Ovary (tissue), 10 donors: ENCODE measurements at regions of chr20 and their contacts with region 1.

Region 1: GRCh38 chr20:41352108-41352507 is 11.5 kb downstream of the LPIN3 start:
- DNase-seq: no peak
- H3K4me3 ChIP-seq: no peak overlapping the region
- H3K27ac ChIP-seq: no peak overlapping the region
- H3K4me1 ChIP-seq: no peaks in the 10 kb centered on the region
- H3K27me3 ChIP-seq: no peaks in the 10 kb centered on the region
- CTCF ChIP-seq: no peak
- EP300 ChIP-seq: no peak
- POLR2A ChIP-seq: no peak

Region 2: GRCh38 chr20:41693136-41693979 is 341.2 kb after region 1 on chr20:
- intact Hi-C with region 1: loop called in 1 of 4 experiments (anchors 10 kb)
- DNase-seq: peak; percentile 72 to 85 (median 77)
- H3K4me3 ChIP-seq: peak overlapping the region; percentile 64
- H3K27ac ChIP-seq: peak overlapping the region; percentile 77 to 95
- H3K4me1 ChIP-seq: no peaks in the 10 kb centered on the region
- H3K27me3 ChIP-seq: no peaks in the 10 kb centered on the region
- CTCF ChIP-seq: peak; percentile 50 to 69 (median 68)
- EP300 ChIP-seq: no peak
- POLR2A ChIP-seq: peak; percentile 11